GM13976 (cell line): ENCODE measurements at regions of chr12 and their contacts with region 1.

Region 1: GRCh38 chr12:118404876-118405521 is 28.6 kb downstream of the SUDS3 start:
- DNase-seq: peak; percentile 57
- CTCF ChIP-seq: peak; percentile 57

Region 2: DNA sequence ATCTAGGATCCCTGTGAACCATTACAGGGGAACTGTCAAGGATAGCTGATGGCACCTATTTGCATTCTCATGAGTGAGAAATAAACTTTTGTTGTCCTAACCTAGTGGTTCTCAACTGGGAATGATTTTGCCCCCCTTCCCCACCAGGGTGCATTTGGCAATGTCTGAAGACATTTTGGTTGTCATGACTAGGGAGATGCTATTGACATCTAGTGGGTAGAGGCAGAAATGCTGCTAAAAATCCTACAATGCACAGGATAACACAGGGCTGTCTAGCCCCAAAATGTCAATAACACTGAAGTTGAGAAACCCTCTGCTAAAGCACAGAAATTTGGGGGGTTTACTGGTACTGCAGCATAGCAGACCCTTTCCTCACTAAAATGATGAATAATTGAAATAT is 435.4 kb after region 1 on chr12:
- in situ Hi-C with region 1: no loop called
- DNase-seq: peak; percentile 20
- CTCF ChIP-seq: peak; percentile 10

Region 3: DNA sequence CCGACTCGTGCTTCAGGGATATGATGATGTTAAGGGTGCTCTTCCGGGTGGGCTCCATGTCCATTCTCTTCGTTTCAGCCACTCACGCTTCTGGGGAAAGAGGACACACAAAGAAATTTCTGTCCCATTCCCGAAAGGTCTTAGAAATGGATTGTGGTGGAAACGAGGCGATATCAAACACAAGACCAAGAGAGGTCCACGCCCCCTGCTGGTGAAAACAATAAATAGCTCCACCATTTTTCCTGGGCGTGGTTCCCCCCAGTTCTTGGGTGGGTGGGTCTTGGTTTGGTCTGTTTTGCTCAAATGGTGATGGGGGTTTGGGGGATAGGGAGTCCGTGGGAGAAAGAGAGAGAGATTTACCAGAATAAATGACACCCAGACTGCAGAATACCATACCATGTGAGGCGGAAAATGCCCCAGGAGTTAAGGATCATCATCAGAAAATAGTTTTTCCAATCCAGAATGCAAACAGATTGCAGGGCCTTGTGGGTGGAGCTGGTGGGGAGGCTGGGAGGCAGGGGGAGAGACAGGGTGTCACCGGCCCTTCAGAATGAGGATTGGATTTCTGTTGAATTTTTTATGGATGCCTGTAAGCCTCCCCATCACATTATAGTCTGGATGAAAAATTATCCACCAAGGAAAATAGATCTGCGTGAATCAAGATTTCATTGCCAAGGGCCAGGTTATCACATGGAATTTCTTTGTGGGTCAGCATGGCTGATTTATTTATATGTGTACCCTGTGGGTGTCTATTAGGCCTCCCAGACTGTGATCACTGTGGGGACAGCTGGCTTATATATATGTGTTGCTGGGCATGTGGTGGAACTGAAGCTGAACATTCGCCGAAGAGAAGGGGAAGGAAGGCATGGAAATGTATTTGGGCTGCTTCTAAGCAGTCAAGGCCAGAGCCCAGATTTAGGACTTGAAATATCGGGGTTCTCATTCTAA is 632.2 kb after region 1 on chr12:
- in situ Hi-C with region 1: loop called (anchors 25 kb)
- DNase-seq: peak; percentile 54
- CTCF ChIP-seq: peak; percentile 50